ENCODE measurements at regions of chr1 and their contacts with region 1.

Region 1: DNA sequence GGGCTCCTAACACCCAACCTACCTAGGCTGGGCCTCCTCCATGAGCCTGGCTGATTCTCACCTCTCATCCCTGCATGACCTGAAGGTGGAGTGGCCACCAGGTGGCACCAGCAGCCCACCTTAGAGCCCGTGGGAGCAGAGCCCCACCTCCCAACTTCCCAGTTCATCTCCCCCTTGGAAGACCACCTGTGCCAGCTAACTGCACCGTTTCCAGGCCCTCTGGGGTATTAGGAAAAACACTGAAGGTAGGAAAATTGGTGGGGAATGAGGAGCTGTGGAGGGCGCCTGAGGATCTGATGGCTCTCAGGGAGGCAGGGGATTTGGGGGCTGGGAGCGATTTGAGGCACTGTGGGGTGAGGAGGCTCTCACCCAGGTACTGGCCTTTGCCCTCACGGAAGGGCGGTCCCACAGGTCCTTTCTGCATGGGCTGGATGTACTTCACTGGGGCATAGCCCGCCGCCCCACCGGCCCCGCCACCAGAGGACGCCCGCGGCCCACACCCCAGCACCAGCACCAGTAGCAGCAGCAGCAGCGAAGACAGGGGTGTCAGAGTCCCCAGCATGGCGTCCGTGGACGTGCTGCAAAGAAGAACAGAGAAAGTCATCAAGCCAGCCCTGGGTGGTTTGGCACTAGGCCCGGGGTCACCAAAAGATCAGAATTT is 11.1 kb downstream of the ADPRS start:
- DNase-seq: peak; percentile 76 to 96
- H3K4me3 ChIP-seq: no peak overlapping the region
- H3K27ac ChIP-seq: no peak overlapping the region
- H3K4me1 ChIP-seq: peaks cover 0 to 11% (median 7%) of the 10 kb centered on the region in 4 experiments; a peak in 3 of 7 replicates
- H3K27me3 ChIP-seq: 0 out of 7 replicates have a peak, but pooled peaks cover 0 to 2% (median 0%) of the 10 kb centered on the region in 4 experiments
- CTCF ChIP-seq: peak; percentile 90 to 97 (median 90)
- EP300 ChIP-seq: no peak
- POLR2A ChIP-seq: no peak
- RAD21 ChIP-seq: peak; percentile 97 to 98

Region 2: DNA sequence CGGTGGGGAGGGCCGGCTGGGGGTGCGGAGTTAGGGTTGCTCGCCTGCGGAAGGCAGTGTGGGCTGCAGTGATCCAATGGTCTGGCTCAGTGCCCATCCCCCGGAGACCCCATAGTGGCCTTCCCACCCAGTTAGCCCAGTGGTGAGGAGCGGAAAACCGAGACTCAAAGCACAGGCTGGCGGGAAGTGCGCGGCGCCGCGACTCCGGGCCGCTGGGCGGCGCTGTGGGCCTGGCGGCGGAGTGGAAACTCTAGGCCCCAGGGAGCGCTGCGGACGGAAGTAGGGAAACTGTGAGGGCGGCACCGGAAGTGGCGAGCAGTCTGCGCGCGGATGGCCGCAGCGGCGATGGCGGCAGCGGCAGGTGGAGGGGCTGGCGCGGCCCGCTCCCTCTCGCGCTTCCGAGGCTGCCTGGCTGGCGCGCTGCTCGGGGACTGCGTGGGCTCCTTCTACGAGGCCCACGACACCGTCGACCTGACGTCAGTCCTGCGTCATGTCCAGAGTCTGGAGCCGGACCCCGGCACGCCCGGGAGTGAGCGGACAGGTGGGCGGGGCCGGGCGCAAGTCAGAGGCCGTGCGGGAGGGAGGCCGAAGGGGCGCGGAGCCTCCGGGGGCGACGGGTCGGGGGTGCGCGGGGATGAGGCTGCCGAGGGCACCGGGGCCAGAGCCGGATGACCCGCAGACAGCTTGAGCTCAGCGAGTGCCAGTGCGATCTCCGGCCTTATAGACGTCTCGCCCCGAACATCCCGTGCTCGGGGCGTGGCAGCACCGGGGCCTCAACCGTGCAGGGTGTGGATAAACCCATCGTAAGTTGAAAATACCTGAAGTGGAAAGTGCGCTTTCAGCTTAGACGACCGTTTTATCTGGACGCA is 11.0 kb before region 1 on chr1 and contains the start of gene ADPRS:
- CTCF ChIA-PET with region 1: interaction called, 38 read pairs
- POLR2A ChIA-PET with region 1: interaction called, 9 read pairs
- DNase-seq: peak; percentile 70 to 96
- H3K4me3 ChIP-seq: peak within 1 kb of the TSS; percentile 70 to 94 (median 81)
- H3K27ac ChIP-seq: peak within 1 kb of the TSS; percentile 36; the same call in 1 of the 2 replicates
- H3K4me1 ChIP-seq: peaks cover 0 to 18% (median 12%) of the 10 kb centered on the region in 4 experiments; a peak in 5 of 7 replicates
- H3K27me3 ChIP-seq: peaks cover 0 to 3% (median 0%) of the 10 kb centered on the region in 4 experiments; a peak in 2 of 7 replicates
- CTCF ChIP-seq: peak in 2 of 3 experiments; percentile 96 to 98; a peak in 3 of 4 replicates
- EP300 ChIP-seq: peak in 1 of 2 experiments; percentile 81; a peak in 1 of 3 replicates
- POLR2A ChIP-seq: peak in 1 of 2 experiments; percentile 98; a peak in 2 of 3 replicates
- RAD21 ChIP-seq: peak; percentile 30 to 59; a peak in 3 of 4 replicates
- total RNA-seq, gene ADPRS: 22.9 and 23.9 TPM in 2 replicates

Region 3: DNA sequence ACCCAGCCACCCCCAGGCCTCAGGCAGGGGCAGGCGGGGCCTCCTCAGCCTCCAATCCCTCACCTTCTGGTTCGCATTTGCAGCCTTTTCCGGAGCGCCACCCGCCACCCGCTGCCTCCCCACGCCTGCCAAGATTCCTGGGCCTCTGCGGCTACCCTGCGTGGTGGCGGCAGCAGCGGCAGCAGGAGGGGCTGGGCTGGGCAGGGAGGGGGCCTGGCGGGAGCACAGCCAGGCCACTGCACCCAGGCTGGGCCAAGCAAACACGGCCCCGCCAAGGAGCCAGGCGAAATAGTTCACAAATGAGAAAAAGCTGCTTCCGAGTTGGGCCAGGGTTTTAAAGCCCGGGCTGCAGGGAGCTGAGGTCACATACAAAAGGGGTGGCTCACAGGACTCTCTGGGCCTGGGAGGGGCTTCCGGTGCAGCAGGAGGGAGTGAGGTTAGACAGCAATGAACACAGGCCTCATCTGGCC is 15.4 kb after region 1 on chr1:
- CTCF ChIA-PET with region 1: interaction called, 74 read pairs
- POLR2A ChIA-PET with region 1: interaction called, 4 read pairs
- DNase-seq: no peak
- H3K4me3 ChIP-seq: no peak overlapping the region
- H3K27ac ChIP-seq: no peak overlapping the region
- H3K4me1 ChIP-seq: peaks cover 0 to 10% (median 5%) of the 10 kb centered on the region in 4 experiments; a peak in 5 of 7 replicates
- H3K27me3 ChIP-seq: no peaks in the 10 kb centered on the region; a peak in 1 of 7 replicates
- CTCF ChIP-seq: no peak
- EP300 ChIP-seq: no peak
- POLR2A ChIP-seq: no peak
- RAD21 ChIP-seq: no peak

Region 4: DNA sequence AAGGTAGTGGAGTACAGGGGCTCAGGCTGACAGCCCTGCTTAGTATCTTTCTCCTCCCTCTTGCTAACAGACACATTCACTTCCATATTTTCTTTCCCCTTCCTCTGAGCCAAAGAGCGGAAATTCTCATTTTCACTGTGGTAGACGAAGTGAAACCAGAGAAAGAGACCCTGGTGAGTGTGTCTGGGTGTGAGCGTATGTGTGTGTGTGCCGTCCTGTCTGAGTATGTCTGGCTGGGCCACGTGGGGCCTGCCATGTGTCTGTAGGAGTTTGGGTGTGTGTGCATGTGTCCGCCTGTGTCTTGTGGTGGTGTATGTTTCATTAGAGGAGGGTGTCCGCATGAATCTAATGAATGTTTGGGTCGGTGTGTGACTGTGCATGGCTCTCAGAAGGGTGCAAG is 23.5 kb after region 1 on chr1:
- CTCF ChIA-PET with region 1: interaction called, 738 read pairs
- POLR2A ChIA-PET with region 1: no interaction called
- DNase-seq: no peak
- H3K4me3 ChIP-seq: no peak overlapping the region
- H3K27ac ChIP-seq: no peak overlapping the region
- H3K4me1 ChIP-seq: peaks cover 0 to 13% (median 6%) of the 10 kb centered on the region in 4 experiments; a peak in 6 of 7 replicates
- H3K27me3 ChIP-seq: peaks cover 16 to 38% (median 30%) of the 10 kb centered on the region in 4 experiments
- CTCF ChIP-seq: no peak
- EP300 ChIP-seq: no peak
- POLR2A ChIP-seq: no peak
- RAD21 ChIP-seq: no peak

Region 5: GRCh38 chr1:36134505-36135329 is 34.9 kb after region 1 on chr1:
- CTCF ChIA-PET with region 1: interaction called, 738 read pairs
- POLR2A ChIA-PET with region 1: interaction called, 61 read pairs
- DNase-seq: peak in 1 of 2 experiments; percentile 90
- H3K4me3 ChIP-seq: no peak overlapping the region
- H3K27ac ChIP-seq: no peak overlapping the region
- H3K4me1 ChIP-seq: peaks cover 0 to 2% (median 0%) of the 10 kb centered on the region in 4 experiments; a peak in 2 of 7 replicates
- H3K27me3 ChIP-seq: no peaks in the 10 kb centered on the region
- CTCF ChIP-seq: peak; percentile 77 to 91 (median 83)
- EP300 ChIP-seq: no peak
- POLR2A ChIP-seq: no peak
- RAD21 ChIP-seq: peak; percentile 90 to 92

Region 6: DNA sequence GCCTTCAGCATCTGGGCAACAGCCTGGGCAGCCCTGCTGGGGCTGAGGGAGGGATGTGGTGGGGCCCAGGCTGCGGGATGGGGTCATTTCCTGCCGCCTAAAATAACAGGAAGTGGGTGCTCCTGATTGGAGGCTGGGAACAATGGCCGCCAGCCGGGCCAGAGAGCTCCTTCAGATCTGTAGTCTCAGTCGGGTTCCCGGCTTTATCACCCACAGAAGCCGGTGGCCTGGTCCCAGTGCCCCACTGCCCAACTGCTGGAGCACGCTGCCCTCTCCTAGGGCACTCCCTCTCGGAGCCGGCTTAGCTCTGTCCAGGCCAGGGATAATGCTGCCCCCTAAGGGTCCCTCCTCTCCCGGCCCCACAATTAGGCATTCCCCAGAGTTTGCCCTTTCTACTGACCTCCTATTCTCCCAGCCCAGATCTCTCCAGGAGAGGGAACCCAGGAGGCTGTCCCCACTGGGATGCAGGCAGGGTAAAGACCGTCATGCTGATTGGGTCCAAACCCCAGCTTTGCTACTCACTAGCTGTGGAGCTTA is 61.2 kb after region 1 on chr1:
- CTCF ChIA-PET with region 1: interaction called, 11 read pairs
- POLR2A ChIA-PET with region 1: interaction called, 10 read pairs
- DNase-seq: peak in 1 of 2 experiments; percentile 82
- H3K4me3 ChIP-seq: peak overlapping the region; percentile 29 to 60 (median 48)
- H3K27ac ChIP-seq: peak overlapping the region; percentile 89; the same call in 1 of the 2 replicates
- H3K4me1 ChIP-seq: peaks cover 0 to 22% (median 13%) of the 10 kb centered on the region in 4 experiments; a peak in 6 of 7 replicates
- H3K27me3 ChIP-seq: no peaks in the 10 kb centered on the region
- CTCF ChIP-seq: peak; percentile 54 to 69 (median 59)
- EP300 ChIP-seq: no peak
- POLR2A ChIP-seq: peak; percentile 93 to 96
- RAD21 ChIP-seq: peak; percentile 42 to 45

Region 7: GRCh38 chr1:36350659-36351226 is 250.9 kb after region 1 on chr1:
- CTCF ChIA-PET with region 1: no interaction called
- POLR2A ChIA-PET with region 1: no interaction called
- DNase-seq: no peak
- H3K4me3 ChIP-seq: no peak overlapping the region
- H3K27ac ChIP-seq: no peak overlapping the region
- H3K4me1 ChIP-seq: peaks cover 0 to 6% (median 0%) of the 10 kb centered on the region in 4 experiments; a peak in 1 of 7 replicates
- H3K27me3 ChIP-seq: no peaks in the 10 kb centered on the region
- CTCF ChIP-seq: no peak
- EP300 ChIP-seq: no peak
- POLR2A ChIP-seq: no peak
- RAD21 ChIP-seq: no peak